Gastrocnemius medialis (tissue), 4 donors: ENCODE measurements at regions of chrX and their contacts with region 1.

Region 1: GRCh38 chrX:23782863-23783568 is at the start of gene SAT1:
- DNase-seq: peak; percentile 91 to 94
- ATAC-seq: peak; percentile 87 to 90
- H3K4me3 ChIP-seq: peak within 1 kb of the TSS; percentile 65 to 85 (median 70)
- H3K27ac ChIP-seq: peak within 1 kb of the TSS; percentile 94 to 96 (median 94)
- H3K4me1 ChIP-seq: peaks cover 0 to 16% of the 10 kb centered on the region in 2 donors
- H3K27me3 ChIP-seq: no peaks in the 10 kb centered on the region
- CTCF ChIP-seq: peak; percentile 69 to 85 (median 83)
- POLR2A ChIP-seq: peak; percentile 92 to 96
- total RNA-seq, gene SAT1: 46.1 to 122 (median 81.4) TPM

Region 2: DNA sequence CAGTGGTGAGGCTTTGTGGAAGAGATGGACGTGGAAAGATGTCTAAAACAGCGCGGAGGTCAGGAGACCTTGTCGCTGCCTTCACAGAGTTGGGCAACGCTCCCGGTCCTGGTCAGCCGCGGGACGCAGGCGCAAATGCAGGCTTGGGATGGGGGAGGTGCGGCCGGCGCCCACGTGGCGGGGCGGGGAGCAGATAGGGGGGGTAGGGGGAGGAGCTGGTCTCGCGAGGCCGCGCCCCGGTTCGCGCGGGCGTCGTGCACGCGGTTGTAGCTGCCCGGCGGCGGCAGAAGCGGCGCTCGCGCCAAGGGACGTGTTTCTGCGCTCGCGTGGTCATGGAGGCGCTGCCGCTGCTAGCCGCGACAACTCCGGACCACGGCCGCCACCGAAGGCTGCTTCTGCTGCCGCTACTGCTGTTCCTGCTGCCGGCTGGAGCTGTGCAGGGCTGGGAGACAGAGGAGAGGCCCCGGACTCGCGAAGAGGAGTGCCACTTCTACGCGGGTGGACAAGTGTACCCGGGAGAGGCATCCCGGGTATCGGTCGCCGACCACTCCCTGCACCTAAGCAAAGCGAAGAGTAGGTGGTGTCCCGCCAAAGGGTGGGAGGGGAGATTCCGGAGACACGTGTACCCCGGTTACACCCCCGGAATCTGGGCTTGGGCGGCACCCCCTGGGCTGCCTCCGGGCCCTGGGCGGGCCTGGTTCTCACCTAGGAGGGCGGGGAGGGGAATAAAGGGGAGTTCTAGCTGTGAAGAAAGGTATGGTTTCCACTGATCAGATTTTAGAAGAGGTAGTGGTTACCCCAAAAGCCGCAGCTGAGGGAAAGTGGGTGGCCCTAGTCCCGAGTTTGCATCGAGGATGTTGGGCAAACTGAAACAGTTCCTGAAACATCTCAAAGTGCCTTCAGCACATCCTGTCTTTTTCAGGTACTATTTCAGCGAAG is 115.5 kb before region 1 on chrX and contains the start of gene PRDX4:
- in situ Hi-C with region 1: no loop called
- intact Hi-C with region 1: loop called (anchors 10 kb)
- DNase-seq: peak; percentile 80 to 88
- ATAC-seq: peak; percentile 93 to 97
- H3K4me3 ChIP-seq: peak within 1 kb of the TSS; percentile 62 to 72 (median 72)
- H3K27ac ChIP-seq: peak within 1 kb of the TSS; percentile 81 to 87 (median 86)
- H3K4me1 ChIP-seq: peaks cover 4 to 9% of the 10 kb centered on the region in 2 donors
- H3K27me3 ChIP-seq: no peaks in the 10 kb centered on the region
- CTCF ChIP-seq: no peak
- POLR2A ChIP-seq: peak; percentile 43 to 49
- total RNA-seq, gene PRDX4: 21.2 to 40.7 (median 37.6) TPM

Region 3: DNA sequence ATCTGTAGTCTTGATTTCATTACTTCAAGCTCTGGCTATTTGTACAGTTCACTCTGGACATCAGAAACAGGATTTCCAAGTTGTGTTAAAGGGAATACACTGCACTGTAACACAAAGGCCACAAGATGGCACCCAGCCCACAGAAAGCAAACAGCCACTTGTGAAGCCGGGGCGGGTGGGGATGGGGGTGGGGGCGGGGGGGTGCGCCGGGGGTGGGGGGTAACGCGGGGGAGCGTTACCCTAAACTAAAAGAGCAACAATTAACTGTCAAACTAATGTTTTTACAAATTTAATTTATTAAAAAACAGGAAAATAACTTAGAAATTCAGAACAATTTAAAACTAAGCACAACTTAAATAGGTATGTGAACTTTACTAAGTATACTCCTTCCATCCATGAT is 88.4 kb before region 1 on chrX:
- in situ Hi-C with region 1: no loop called
- intact Hi-C with region 1: loop called (anchors 10 kb)
- DNase-seq: peak; percentile 12 to 35
- ATAC-seq: peak; percentile 49 to 50
- H3K4me3 ChIP-seq: no peak overlapping the region
- H3K27ac ChIP-seq: no peak overlapping the region
- H3K4me1 ChIP-seq: no peaks in the 10 kb centered on the region
- H3K27me3 ChIP-seq: no peaks in the 10 kb centered on the region
- CTCF ChIP-seq: peak in 2 of 5 experiments; percentile 47 to 49
- POLR2A ChIP-seq: no peak

Region 4: DNA sequence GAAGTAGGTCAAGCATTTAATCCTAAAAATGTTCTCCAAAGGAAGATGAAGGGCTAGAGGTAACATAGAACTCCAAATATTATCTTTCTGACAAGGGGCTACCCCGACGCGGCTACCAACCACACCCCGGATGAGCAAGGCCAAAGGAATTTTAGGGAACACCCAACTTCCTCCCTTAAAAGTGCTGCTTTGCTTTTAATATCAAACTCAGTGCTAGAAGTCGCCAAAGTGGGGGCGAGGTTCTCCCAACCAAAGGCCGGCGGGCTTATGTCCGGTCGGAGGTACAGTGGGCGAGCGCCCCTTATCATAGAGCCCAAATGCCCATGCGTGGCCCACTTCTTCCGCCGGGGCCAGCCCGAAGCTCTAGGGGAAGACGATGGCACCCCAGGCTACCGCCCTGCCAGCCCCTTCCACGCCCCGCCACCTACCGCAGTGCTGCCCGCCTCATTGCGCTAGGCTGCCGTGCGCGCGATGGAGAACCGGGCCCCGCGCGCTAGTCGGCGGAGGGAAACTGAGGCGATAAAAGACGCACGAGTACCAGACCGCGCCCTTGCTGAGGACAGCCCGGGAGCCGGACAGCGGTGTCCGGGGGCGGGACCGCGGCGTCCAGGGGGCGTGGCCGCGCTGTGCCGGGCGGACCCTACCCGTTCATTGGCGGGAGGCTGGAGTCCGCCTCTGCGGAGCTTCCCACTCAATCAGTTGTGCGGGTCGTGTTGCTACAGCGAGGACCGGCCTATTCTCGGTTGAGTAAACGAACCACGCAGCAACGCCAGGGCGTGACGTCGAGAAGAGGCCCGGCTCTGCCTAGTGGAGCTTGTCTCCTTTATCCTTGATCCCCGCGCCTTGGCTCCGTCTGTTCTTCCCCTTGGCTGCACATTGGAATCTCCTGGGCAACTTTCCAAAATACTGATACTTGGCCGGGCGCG is 40.1 kb before region 1 on chrX and contains the start of gene ACOT9:
- in situ Hi-C with region 1: no loop called
- intact Hi-C with region 1: loop called (anchors 1 kb)
- DNase-seq: peak; percentile 85 to 96
- ATAC-seq: peak; percentile 91 to 95
- H3K4me3 ChIP-seq: peak within 1 kb of the TSS; percentile 73 to 85 (median 82)
- H3K27ac ChIP-seq: peak within 1 kb of the TSS; percentile 91 to 96 (median 94)
- H3K4me1 ChIP-seq: no peaks in the 10 kb centered on the region
- H3K27me3 ChIP-seq: no peaks in the 10 kb centered on the region
- CTCF ChIP-seq: no peak
- POLR2A ChIP-seq: peak; percentile 78 to 81
- total RNA-seq, gene ACOT9: 12.3 to 21.9 (median 20.6) TPM

Region 5: GRCh38 chrX:23901805-23902204 is 118.8 kb after region 1 on chrX:
- in situ Hi-C with region 1: loop called (anchors 5 to 10 kb)
- intact Hi-C with region 1: loop called (anchors 1 kb)
- DNase-seq: peak; percentile 7 to 37
- ATAC-seq: peak; percentile 83
- H3K4me3 ChIP-seq: no peak overlapping the region
- H3K27ac ChIP-seq: peak overlapping the region; percentile 50 to 75 (median 66)
- H3K4me1 ChIP-seq: peaks cover 21 to 26% of the 10 kb centered on the region in 2 donors
- H3K27me3 ChIP-seq: no peaks in the 10 kb centered on the region
- CTCF ChIP-seq: peak in 4 of 5 experiments; percentile 29 to 34 (median 30)
- POLR2A ChIP-seq: no peak

Region 6: DNA sequence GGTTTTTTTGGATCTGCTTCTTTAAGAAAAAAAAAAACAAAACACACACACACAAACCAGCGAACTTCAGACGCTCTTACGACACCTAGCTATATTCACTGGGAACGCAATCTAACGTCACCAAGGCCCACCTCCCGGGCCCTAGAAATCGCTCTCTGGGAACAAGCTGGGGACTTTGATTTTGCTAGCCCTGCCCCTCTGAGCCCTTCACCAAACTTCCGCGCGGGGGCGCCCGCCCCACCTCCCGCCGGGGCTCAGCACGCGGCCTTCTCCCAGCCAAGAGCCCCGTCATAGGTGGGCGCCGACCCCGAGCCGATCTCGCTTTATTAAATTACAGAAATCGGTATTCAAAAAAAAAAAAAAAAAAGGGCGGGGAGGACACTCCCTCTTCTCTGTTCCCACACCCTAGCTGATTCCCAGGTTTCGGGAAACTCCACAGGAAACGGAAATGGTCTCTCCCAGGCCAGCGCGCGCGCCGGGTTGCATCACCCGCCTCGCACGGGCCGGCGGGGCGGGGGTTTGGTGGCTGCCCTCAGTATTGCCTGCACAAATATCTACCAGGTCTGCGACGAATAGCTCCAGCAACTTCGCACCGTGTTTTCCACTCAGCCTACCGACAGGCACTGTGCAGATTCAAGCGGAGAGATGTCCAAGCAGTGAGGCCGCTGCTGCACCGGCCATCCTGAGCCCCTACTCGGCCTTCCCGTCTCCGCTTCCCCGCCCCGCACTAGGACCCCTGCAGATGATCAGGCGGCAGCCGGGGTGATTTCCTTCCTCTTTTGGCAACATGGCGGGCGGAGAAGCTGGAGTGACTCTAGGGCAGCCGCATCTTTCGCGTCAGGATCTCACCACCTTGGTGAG is 271.4 kb after region 1 on chrX and contains the start of gene EIF2S3:
- in situ Hi-C with region 1: loop called in 1 of 4 experiments (anchors 10 kb)
- intact Hi-C with region 1: no loop called
- DNase-seq: peak; percentile 69 to 86
- ATAC-seq: peak; percentile 97
- H3K4me3 ChIP-seq: peak within 1 kb of the TSS in 3 of 4 donors; percentile 66 to 83 (median 71)
- H3K27ac ChIP-seq: no peak within 1 kb of the TSS
- H3K4me1 ChIP-seq: peaks cover 0 to 3% of the 10 kb centered on the region in 2 donors
- H3K27me3 ChIP-seq: no peaks in the 10 kb centered on the region
- CTCF ChIP-seq: peak; percentile 33 to 80 (median 71)
- POLR2A ChIP-seq: peak; percentile 29 to 48
- total RNA-seq, gene EIF2S3: 50.8 to 89.1 (median 70.2) TPM